GM12878 (cell line): ENCODE measurements at regions of chr7 and their contacts with region 1.

Region 1: GRCh38 chr7:50467817-50468610 is 17.9 kb upstream of the FIGNL1 start:
- DNase-seq: no peak
- ATAC-seq: peak; percentile 95
- H3K4me3 ChIP-seq: no peak overlapping the region
- H3K27ac ChIP-seq: no peak overlapping the region
- H3K4me1 ChIP-seq: no peaks in the 10 kb centered on the region
- H3K27me3 ChIP-seq: no peaks in the 10 kb centered on the region; a peak in 2 of 4 replicates
- CTCF ChIP-seq: peak; percentile 78 to 90 (median 85)
- EP300 ChIP-seq: no peak
- POLR2A ChIP-seq: no peak
- RAD21 ChIP-seq: peak; percentile 85

Region 2: DNA sequence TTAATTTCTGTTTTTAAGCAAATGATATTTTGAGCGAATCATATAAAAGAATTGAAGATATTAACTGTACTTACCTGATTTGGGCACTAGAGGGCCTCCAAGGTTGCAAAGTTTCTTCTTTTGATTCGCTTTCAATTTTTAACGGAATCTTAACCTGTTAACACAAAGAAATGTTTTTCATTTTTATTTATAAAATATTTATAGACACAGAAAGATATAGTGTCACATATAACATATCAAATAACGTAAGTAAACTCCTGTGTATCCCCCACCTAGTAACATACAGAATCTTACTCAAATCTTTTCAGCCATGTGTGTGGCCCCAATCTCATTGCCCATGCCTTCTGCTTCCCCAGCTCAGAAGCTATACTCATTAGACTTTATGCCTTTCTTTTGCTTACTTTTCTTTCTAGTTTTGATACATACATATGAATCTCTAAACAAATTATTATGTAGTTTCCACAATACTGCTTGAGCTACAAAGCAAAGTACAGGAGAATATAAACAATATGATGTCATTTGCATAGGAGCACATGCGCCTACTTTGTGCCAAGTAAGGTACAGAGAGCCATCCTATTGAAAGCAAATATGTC is 325.5 kb before region 1 on chr7:
- CTCF ChIA-PET with region 1: interaction called, 10 read pairs
- POLR2A ChIA-PET with region 1: no interaction called
- RAD21 ChIA-PET with region 1: no interaction called
- SMC1A ChIA-PET with region 1: interaction called, 3 read pairs
- in situ Hi-C with region 1: no loop called
- intact Hi-C with region 1: no loop called
- DNase-seq: peak; percentile 24
- ATAC-seq: peak; percentile 51
- H3K4me3 ChIP-seq: no peak overlapping the region
- H3K27ac ChIP-seq: no peak overlapping the region
- H3K4me1 ChIP-seq: peaks cover 24% of the 10 kb centered on the region
- H3K27me3 ChIP-seq: no peaks in the 10 kb centered on the region; a peak in 1 of 4 replicates
- CTCF ChIP-seq: peak; percentile 55 to 61 (median 60)
- EP300 ChIP-seq: no peak
- POLR2A ChIP-seq: no peak
- RAD21 ChIP-seq: peak; percentile 85

Region 3: DNA sequence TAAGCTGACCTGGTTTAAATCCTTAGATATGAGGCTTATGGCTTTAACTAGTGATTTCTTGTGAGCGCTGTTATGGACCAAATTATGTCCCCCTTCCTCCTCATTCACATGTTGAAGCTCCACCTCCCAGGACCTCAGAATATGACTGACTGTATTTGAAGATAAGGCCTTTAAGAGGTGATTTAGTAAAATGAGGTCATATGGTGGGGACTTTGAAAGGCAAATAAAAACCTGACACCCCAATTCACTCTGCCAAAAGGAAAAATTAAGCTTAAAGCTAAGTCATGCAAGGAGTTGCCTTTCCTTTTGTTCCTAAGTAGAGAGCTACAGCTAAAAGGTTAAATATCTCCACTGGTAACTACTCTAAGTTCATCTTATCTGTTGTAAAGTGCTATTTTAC is 18.5 kb after region 1 on chr7:
- CTCF ChIA-PET with region 1: interaction called, 11 read pairs
- POLR2A ChIA-PET with region 1: no interaction called
- RAD21 ChIA-PET with region 1: no interaction called
- SMC1A ChIA-PET with region 1: no interaction called
- in situ Hi-C with region 1: no loop called
- intact Hi-C with region 1: no loop called
- DNase-seq: no peak
- ATAC-seq: no peak
- H3K4me3 ChIP-seq: no peak overlapping the region
- H3K27ac ChIP-seq: no peak overlapping the region
- H3K4me1 ChIP-seq: no peaks in the 10 kb centered on the region
- H3K27me3 ChIP-seq: no peaks in the 10 kb centered on the region
- CTCF ChIP-seq: no peak
- EP300 ChIP-seq: no peak
- POLR2A ChIP-seq: no peak
- RAD21 ChIP-seq: no peak

Region 4: GRCh38 chr7:50584914-50585361 is 116.9 kb after region 1 on chr7:
- CTCF ChIA-PET with region 1: no interaction called
- POLR2A ChIA-PET with region 1: no interaction called
- RAD21 ChIA-PET with region 1: no interaction called
- SMC1A ChIA-PET with region 1: no interaction called
- in situ Hi-C with region 1: no loop called
- intact Hi-C with region 1: no loop called
- DNase-seq: no peak
- ATAC-seq: no peak
- H3K4me3 ChIP-seq: no peak overlapping the region
- H3K27ac ChIP-seq: no peak overlapping the region
- H3K4me1 ChIP-seq: no peaks in the 10 kb centered on the region
- H3K27me3 ChIP-seq: no peaks in the 10 kb centered on the region; a peak in 1 of 4 replicates
- CTCF ChIP-seq: no peak
- EP300 ChIP-seq: no peak
- POLR2A ChIP-seq: no peak
- RAD21 ChIP-seq: no peak

Region 5: GRCh38 chr7:50679218-50680007 is 211.4 kb after region 1 on chr7:
- CTCF ChIA-PET with region 1: interaction called, 10 read pairs
- POLR2A ChIA-PET with region 1: no interaction called
- RAD21 ChIA-PET with region 1: interaction called, 5 read pairs
- SMC1A ChIA-PET with region 1: interaction called, 14 read pairs
- in situ Hi-C with region 1: loop called (anchors 5 kb)
- intact Hi-C with region 1: loop called (anchors 1 kb)
- DNase-seq: no peak
- ATAC-seq: peak; percentile 80
- H3K4me3 ChIP-seq: no peak overlapping the region
- H3K27ac ChIP-seq: no peak overlapping the region
- H3K4me1 ChIP-seq: no peaks in the 10 kb centered on the region
- H3K27me3 ChIP-seq: peaks cover 4 to 10% of the 10 kb centered on the region in 2 experiments; a peak in 3 of 4 replicates
- CTCF ChIP-seq: peak; percentile 29 to 55 (median 40); a peak in 4 of 6 replicates
- EP300 ChIP-seq: no peak
- POLR2A ChIP-seq: no peak
- RAD21 ChIP-seq: peak; percentile 71